ENCODE measurements at regions of chr2 and their contacts with region 1.

Region 1: GRCh38 chr2:75646583-75647425 is at the start of gene MRPL19:
- DNase-seq: peak; percentile 94
- ATAC-seq: peak; percentile 99
- H3K4me3 ChIP-seq: peak within 1 kb of the TSS; percentile 82 to 94 (median 90)
- H3K27ac ChIP-seq: peak within 1 kb of the TSS; percentile 82
- H3K4me1 ChIP-seq: peaks cover 26% of the 10 kb centered on the region
- H3K27me3 ChIP-seq: no peaks in the 10 kb centered on the region; a peak in 1 of 5 replicates
- CTCF ChIP-seq: no peak; the same call in 1 of the 2 replicates
- EP300 ChIP-seq: no peak
- POLR2A ChIP-seq: peak; percentile 86 to 91
- RAD21 ChIP-seq: peak; percentile 67
- total RNA-seq, gene MRPL19: 163 and 248 TPM in 2 replicates

Region 2: GRCh38 chr2:75592028-75592427 is 54.8 kb before region 1 on chr2:
- CTCF ChIA-PET with region 1: no interaction called
- POLR2A ChIA-PET with region 1: no interaction called
- in situ Hi-C with region 1: no loop called
- intact Hi-C with region 1: no loop called
- DNase-seq: peak; percentile 41
- ATAC-seq: no peak
- H3K4me3 ChIP-seq: no peak overlapping the region
- H3K27ac ChIP-seq: no peak overlapping the region
- H3K4me1 ChIP-seq: peaks cover 25% of the 10 kb centered on the region
- H3K27me3 ChIP-seq: no peaks in the 10 kb centered on the region; a peak in 1 of 5 replicates
- CTCF ChIP-seq: no peak
- EP300 ChIP-seq: no peak
- POLR2A ChIP-seq: no peak
- RAD21 ChIP-seq: no peak

Region 3: DNA sequence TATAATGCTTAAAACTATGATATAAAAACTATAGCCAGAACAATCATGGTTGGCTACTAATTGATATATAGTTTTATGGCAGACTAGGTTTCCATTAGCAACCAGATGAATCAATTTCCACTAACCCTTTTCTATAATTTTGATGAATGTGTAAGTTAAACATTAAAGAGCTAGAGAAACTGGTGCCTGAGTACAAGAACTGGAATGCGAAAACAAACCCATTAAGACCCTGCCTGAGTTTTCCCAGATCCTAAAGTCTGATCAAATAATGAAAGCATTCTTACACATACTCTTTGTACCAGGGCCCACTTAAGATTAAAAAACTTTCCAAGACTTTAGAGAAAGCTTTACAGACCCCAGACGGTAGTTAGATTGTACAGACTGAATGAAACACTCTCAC is 21.1 kb after region 1 on chr2:
- CTCF ChIA-PET with region 1: no interaction called
- POLR2A ChIA-PET with region 1: interaction called, 14 read pairs
- in situ Hi-C with region 1: no loop called
- intact Hi-C with region 1: loop called (anchors 2 kb)
- DNase-seq: no peak
- ATAC-seq: no peak; the same call in 2 of the 3 replicates
- H3K4me3 ChIP-seq: no peak overlapping the region
- H3K27ac ChIP-seq: no peak overlapping the region
- H3K4me1 ChIP-seq: peaks cover 5% of the 10 kb centered on the region
- H3K27me3 ChIP-seq: no peaks in the 10 kb centered on the region
- CTCF ChIP-seq: no peak
- EP300 ChIP-seq: no peak
- POLR2A ChIP-seq: no peak
- RAD21 ChIP-seq: no peak

Region 4: DNA sequence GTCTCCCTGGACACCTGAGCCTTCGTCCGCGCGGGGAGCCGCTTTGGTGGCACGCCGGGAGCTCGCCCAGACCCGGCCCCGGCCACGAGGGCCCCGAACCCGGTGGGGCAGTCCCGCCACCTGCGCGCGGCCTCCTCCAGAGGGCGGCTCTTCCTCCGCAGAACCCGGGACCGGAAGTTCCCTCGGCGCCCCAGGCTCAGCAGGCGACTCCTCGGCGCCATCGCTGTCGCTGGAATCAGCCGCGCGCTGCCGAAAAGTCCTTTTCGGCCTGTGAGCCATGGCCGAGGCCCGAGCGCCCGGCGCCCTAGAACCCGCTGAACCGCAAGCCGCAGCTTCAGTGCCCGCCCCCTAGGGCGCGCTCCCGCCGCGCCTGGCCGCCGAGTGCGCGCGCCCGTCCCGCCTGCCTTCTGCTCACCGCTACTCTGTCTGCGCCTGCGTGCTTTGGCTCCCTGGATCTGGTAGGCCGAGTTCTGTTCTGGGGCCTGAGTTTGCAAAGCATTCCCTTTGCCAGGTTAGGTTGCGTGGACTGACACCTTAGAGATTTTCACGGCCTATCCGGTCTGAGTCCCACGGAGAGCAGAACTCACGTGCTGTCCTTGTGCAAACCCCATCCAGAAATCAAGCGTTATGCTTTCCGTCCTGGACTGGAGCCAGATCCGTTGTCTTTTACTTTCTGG is 63.9 kb after region 1 on chr2 and contains the start of gene GCFC2:
- CTCF ChIA-PET with region 1: no interaction called
- POLR2A ChIA-PET with region 1: interaction called, 15 read pairs
- in situ Hi-C with region 1: no loop called
- intact Hi-C with region 1: loop called (anchors 2 kb)
- DNase-seq: peak; percentile 90
- ATAC-seq: peak; percentile 97
- H3K4me3 ChIP-seq: peak within 1 kb of the TSS; percentile 66 to 75 (median 67)
- H3K27ac ChIP-seq: peak within 1 kb of the TSS; percentile 94
- H3K4me1 ChIP-seq: peaks cover 43% of the 10 kb centered on the region
- H3K27me3 ChIP-seq: no peaks in the 10 kb centered on the region; a peak in 1 of 5 replicates
- CTCF ChIP-seq: peak; percentile 76
- EP300 ChIP-seq: no peak; a peak in 2 of 4 replicates
- POLR2A ChIP-seq: peak; percentile 87 to 91
- RAD21 ChIP-seq: peak; percentile 74; the same call in 1 of the 2 replicates
- total RNA-seq, gene GCFC2: 49.0 and 65.8 TPM in 2 replicates

Measured in HepG2 (cell line).